ENCODE measurements at regions of chr17 and their contacts with region 1.

Region 1: GRCh38 chr17:7818746-7819645 is 15.0 kb upstream of the KDM6B start:
- DNase-seq: no peak
- H3K4me3 Mint-ChIP-seq: no peak overlapping the region
- H3K27ac Mint-ChIP-seq: no peak overlapping the region
- H3K4me1 Mint-ChIP-seq: peaks cover 5% of the 10 kb centered on the region
- H3K27me3 Mint-ChIP-seq: no peaks in the 10 kb centered on the region
- CTCF ChIP-seq: no peak

Region 2: GRCh38 chr17:7851438-7852256 is 32.7 kb after region 1 on chr17:
- CTCF ChIA-PET with region 1: interaction called, 27 read pairs
- POLR2A ChIA-PET with region 1: no interaction called
- intact Hi-C with region 1: loop called (anchors 1 kb)
- DNase-seq: peak; percentile 85
- H3K4me3 Mint-ChIP-seq: no peak overlapping the region
- H3K27ac Mint-ChIP-seq: peak overlapping the region; percentile 16
- H3K4me1 Mint-ChIP-seq: peaks cover 7% of the 10 kb centered on the region
- H3K27me3 Mint-ChIP-seq: no peaks in the 10 kb centered on the region
- CTCF ChIP-seq: peak; percentile 91

Region 3: GRCh38 chr17:7856883-7857723 is 38.1 kb after region 1 on chr17 and contains the start of gene NAA38:
- CTCF ChIA-PET with region 1: interaction called, 27 read pairs
- POLR2A ChIA-PET with region 1: interaction called, 3 read pairs
- intact Hi-C with region 1: loop called (anchors 1 kb)
- DNase-seq: peak; percentile 99
- H3K4me3 Mint-ChIP-seq: no peak within 1 kb of the TSS
- H3K27ac Mint-ChIP-seq: no peak within 1 kb of the TSS
- H3K4me1 Mint-ChIP-seq: peaks cover 7% of the 10 kb centered on the region
- H3K27me3 Mint-ChIP-seq: no peaks in the 10 kb centered on the region
- CTCF ChIP-seq: peak; percentile 22
- total RNA-seq, gene NAA38: 70.2 and 83.4 TPM in 2 replicates